CD4-positive, alpha-beta memory T cell (primary cell): ENCODE measurements at regions of chr21 and their contacts with region 1.

Region 1: DNA sequence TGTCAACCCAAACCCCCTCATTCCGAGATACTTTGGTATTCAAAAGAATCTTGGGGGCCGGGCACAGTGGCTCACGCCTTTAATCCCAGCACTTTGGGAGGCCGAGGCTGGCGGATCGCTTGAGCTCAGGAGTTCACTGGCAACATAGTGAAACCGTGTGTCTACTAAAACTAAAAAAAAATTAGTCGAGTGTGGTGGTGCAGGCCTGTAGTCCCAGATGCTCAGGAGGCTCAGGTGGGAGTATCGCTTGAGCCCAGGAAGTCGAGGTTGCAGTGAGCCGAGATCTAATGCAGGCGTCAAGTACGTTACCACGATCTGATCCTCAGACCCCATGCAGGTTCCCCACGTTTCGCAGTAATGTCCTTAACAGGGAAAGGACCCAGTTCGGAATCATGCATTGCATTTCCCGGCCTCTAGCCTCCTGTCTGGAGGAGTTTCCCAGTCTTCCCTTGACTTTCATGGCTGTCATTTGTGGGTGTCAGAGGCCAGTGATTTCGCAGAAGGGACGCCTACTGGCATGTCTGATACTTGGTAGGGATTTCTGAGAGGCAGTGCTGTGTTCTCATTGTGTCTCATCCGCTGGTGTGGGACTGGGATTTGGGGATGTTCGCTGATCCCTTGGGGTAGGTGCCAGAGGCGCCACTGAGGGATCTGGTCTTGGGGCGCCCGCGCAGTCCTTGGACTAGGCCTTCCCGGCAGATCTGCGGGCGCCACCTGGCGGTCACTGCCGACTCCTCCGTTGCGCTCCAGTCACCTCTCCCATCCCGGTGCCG is 39.3 kb upstream of the HMGN1 start:
- DNase-seq: peak; percentile 82 to 86 (median 83)
- H3K4me3 ChIP-seq: peak overlapping the region; percentile 33 to 54
- H3K4me3 Mint-ChIP-seq: peak overlapping the region; percentile 88 to 95 (median 89)
- H3K27ac ChIP-seq: peak overlapping the region; percentile 66
- H3K27ac Mint-ChIP-seq: peak overlapping the region; percentile 88 to 96 (median 95)
- H3K4me1 ChIP-seq: peaks cover 37% of the 10 kb centered on the region
- H3K4me1 Mint-ChIP-seq: peaks cover 11 to 45% (median 29%) of the 10 kb centered on the region in 4 donors
- H3K27me3 ChIP-seq: no peaks in the 10 kb centered on the region
- H3K27me3 Mint-ChIP-seq: no peaks in the 10 kb centered on the region

Region 2: GRCh38 chr21:38505654-38506515 is 882.3 kb before region 1 on chr21:
- CTCF ChIA-PET with region 1: no interaction called
- POLR2A ChIA-PET with region 1: no interaction called
- intact Hi-C with region 1: loop called (anchors 5 kb)
- DNase-seq: peak in 2 of 5 donors; percentile 1 to 3
- H3K4me3 ChIP-seq: no peak overlapping the region
- H3K4me3 Mint-ChIP-seq: no peak overlapping the region
- H3K27ac ChIP-seq: no peak overlapping the region
- H3K27ac Mint-ChIP-seq: no peak overlapping the region
- H3K4me1 ChIP-seq: no peaks in the 10 kb centered on the region
- H3K4me1 Mint-ChIP-seq: peaks cover 3 to 7% (median 3%) of the 10 kb centered on the region in 4 donors
- H3K27me3 ChIP-seq: peaks cover 6% of the 10 kb centered on the region
- H3K27me3 Mint-ChIP-seq: peaks cover 14 to 27% of the 10 kb centered on the region in 2 donors

Region 3: GRCh38 chr21:38766987-38767722 is 621.1 kb before region 1 on chr21:
- CTCF ChIA-PET with region 1: interaction called, 5 read pairs
- POLR2A ChIA-PET with region 1: no interaction called
- intact Hi-C with region 1: loop called (anchors 1 kb)
- DNase-seq: peak; percentile 69 to 80 (median 74)
- H3K4me3 ChIP-seq: peak overlapping the region; percentile 63 to 71
- H3K4me3 Mint-ChIP-seq: peak overlapping the region; percentile 85 to 96 (median 92)
- H3K27ac ChIP-seq: peak overlapping the region; percentile 72
- H3K27ac Mint-ChIP-seq: peak overlapping the region; percentile 86 to 96 (median 91)
- H3K4me1 ChIP-seq: peaks cover 27% of the 10 kb centered on the region
- H3K4me1 Mint-ChIP-seq: peaks cover 22 to 35% (median 31%) of the 10 kb centered on the region in 4 donors
- H3K27me3 ChIP-seq: no peaks in the 10 kb centered on the region
- H3K27me3 Mint-ChIP-seq: no peaks in the 10 kb centered on the region

Region 4: GRCh38 chr21:39183237-39184007 is 204.8 kb before region 1 on chr21 and contains the start of gene PSMG1:
- CTCF ChIA-PET with region 1: no interaction called
- POLR2A ChIA-PET with region 1: interaction called, 7 read pairs
- intact Hi-C with region 1: loop called (anchors 1 kb)
- DNase-seq: peak; percentile 92 to 94 (median 93)
- H3K4me3 ChIP-seq: peak within 1 kb of the TSS; percentile 79 to 85
- H3K4me3 Mint-ChIP-seq: peak within 1 kb of the TSS; percentile 95 to 100 (median 98)
- H3K27ac ChIP-seq: peak within 1 kb of the TSS; percentile 84
- H3K27ac Mint-ChIP-seq: peak within 1 kb of the TSS; percentile 95 to 98 (median 97)
- H3K4me1 ChIP-seq: peaks cover 30% of the 10 kb centered on the region
- H3K4me1 Mint-ChIP-seq: peaks cover 34 to 79% (median 48%) of the 10 kb centered on the region in 4 donors
- H3K27me3 ChIP-seq: no peaks in the 10 kb centered on the region
- H3K27me3 Mint-ChIP-seq: no peaks in the 10 kb centered on the region
- total RNA-seq, gene PSMG1: 17.2 to 19.9 TPM

Region 5: DNA sequence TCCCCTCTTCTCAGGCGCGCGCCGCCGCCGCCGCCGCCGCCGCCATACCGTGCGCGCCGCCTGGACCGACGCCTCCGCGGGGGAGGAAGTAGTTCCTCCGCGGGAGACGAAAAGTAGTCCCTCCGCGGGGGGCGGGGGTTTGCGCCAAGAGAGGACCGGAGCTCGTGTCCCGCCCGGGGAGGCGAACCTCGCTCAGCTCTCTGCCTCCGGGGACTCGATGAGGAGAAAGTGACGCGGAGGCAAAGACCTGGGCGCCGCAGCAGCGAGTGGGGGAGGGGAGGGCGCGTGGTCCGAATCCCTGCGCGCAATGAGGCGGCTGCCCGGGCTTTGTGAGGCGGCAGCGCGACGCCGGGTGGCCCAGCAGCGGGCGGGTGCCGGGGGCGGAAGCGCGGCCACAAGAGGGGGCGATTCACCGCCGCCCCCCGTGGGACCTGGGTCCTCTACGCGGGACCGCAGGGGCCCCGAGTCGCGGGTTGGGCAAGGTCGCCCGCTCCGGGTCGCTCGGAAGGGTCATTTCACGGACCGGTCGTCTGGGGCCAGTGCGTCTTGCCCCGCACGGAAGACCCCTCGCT is 74.6 kb before region 1 on chr21 and contains the start of gene BRWD1:
- CTCF ChIA-PET with region 1: interaction called, 7 read pairs
- POLR2A ChIA-PET with region 1: interaction called, 29 read pairs
- intact Hi-C with region 1: loop called (anchors 1 kb)
- DNase-seq: peak; percentile 80 to 87 (median 86)
- H3K4me3 ChIP-seq: peak within 1 kb of the TSS; percentile 33 to 85
- H3K4me3 Mint-ChIP-seq: peak within 1 kb of the TSS; percentile 85 to 95 (median 92)
- H3K27ac ChIP-seq: peak within 1 kb of the TSS; percentile 74
- H3K27ac Mint-ChIP-seq: peak within 1 kb of the TSS; percentile 92 to 99 (median 95)
- H3K4me1 ChIP-seq: peaks cover 35% of the 10 kb centered on the region
- H3K4me1 Mint-ChIP-seq: peaks cover 33 to 53% (median 40%) of the 10 kb centered on the region in 4 donors
- H3K27me3 ChIP-seq: no peaks in the 10 kb centered on the region
- H3K27me3 Mint-ChIP-seq: peaks cover 0 to 2% of the 10 kb centered on the region in 2 donors
- total RNA-seq, gene BRWD1: 92.9 to 99.0 TPM

Region 6: GRCh38 chr21:39373644-39374043 is 14.6 kb before region 1 on chr21:
- CTCF ChIA-PET with region 1: interaction called, 7 read pairs
- POLR2A ChIA-PET with region 1: interaction called, 3 read pairs
- intact Hi-C with region 1: loop called (anchors 2 kb)
- DNase-seq: peak in 1 of 5 donors; percentile 18
- H3K4me3 ChIP-seq: no peak overlapping the region
- H3K4me3 Mint-ChIP-seq: no peak overlapping the region
- H3K27ac ChIP-seq: no peak overlapping the region
- H3K27ac Mint-ChIP-seq: no peak overlapping the region
- H3K4me1 ChIP-seq: no peaks in the 10 kb centered on the region
- H3K4me1 Mint-ChIP-seq: peaks cover 0 to 4% (median 0%) of the 10 kb centered on the region in 4 donors
- H3K27me3 ChIP-seq: no peaks in the 10 kb centered on the region
- H3K27me3 Mint-ChIP-seq: peaks cover 5 to 6% of the 10 kb centered on the region in 2 donors

Region 7: DNA sequence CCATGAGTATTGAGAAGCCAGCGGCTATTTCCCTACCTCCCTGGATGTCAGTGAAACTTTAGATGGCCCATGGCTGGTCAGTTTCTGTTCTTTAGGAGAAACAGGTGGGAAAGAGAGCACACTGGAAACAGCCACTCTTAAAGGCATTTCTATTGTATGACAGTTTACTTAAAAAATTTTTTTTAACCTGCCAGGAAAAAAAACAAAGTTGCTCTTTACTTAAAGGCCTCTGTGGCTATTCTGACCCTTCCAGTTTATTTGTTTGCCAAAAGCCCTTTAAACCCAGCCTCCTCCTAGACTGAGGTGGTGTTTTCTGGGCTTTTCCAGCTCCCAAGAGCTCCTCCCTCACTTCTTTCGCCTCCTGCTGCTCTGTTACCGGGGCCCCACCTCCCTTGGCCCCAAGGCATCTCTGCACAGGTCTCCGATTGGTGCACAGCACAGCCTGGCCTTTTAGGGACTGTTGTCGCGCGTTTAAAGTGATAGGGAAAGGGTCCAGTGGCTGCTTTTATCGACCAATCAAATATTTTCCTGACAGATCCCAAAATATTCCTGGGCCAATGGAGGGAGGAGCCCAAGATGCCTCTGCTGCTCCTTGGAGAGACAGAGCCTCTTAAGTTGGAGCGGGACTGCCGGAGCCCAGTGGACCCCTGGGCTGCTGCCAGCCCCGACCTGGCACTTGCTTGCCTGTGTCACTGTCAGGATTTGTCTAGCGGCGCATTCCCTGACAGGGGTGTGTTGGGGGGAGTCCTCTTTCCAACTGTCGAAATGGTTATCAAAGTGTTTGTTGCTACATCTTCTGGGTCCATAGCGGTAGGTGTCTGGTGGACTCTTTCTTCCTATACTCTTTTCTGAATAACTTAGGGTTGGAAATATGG is 63.3 kb after region 1 on chr21 and contains the start of gene SH3BGR:
- CTCF ChIA-PET with region 1: no interaction called
- POLR2A ChIA-PET with region 1: no interaction called
- intact Hi-C with region 1: no loop called
- DNase-seq: no peak
- H3K4me3 ChIP-seq: no peak within 1 kb of the TSS
- H3K4me3 Mint-ChIP-seq: no peak within 1 kb of the TSS
- H3K27ac ChIP-seq: no peak within 1 kb of the TSS
- H3K27ac Mint-ChIP-seq: peak within 1 kb of the TSS in 1 of 7 donors; percentile 3
- H3K4me1 ChIP-seq: no peaks in the 10 kb centered on the region
- H3K4me1 Mint-ChIP-seq: peaks cover 0 to 2% (median under 1%) of the 10 kb centered on the region in 4 donors
- H3K27me3 ChIP-seq: peaks cover 3% of the 10 kb centered on the region
- H3K27me3 Mint-ChIP-seq: peaks cover 4 to 12% of the 10 kb centered on the region in 2 donors
- total RNA-seq, gene SH3BGR: 0.58 to 2.4 TPM